RWPE1 (cell line): ENCODE measurements at regions of chr16 and their contacts with region 1.

Region 1: GRCh38 chr16:31002250-31002700 is 8.2 kb downstream of the STX1B start:
- DNase-seq: no peak
- H3K27ac ChIP-seq: peak overlapping the region; percentile 14; the same call in 1 of the 2 replicates
- CTCF ChIP-seq: no peak

Region 2: DNA sequence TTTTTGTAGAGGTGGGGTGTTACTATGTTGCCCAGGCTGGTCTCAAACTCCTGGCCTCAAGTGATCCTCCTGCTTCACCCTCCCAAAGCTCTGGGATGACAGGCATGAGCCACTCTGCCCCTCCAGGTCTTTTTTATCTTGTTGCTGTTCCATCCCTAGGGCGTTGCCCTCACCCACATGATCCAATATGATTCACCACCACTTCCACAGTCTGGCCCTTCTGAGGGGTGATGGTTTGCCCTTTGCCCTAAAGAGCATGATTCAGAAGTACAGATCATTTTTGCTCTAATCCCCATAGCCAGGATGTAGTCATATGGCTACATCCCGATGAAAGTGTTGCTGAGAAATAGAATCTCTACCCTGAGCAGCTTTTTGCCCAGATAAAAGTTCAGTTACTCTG is 49.8 kb after region 1 on chr16:
- CTCF ChIA-PET with region 1: no interaction called
- POLR2A ChIA-PET with region 1: interaction called, 12 read pairs
- DNase-seq: peak; percentile 95
- H3K27ac ChIP-seq: peak overlapping the region; percentile 92
- CTCF ChIP-seq: no peak